ENCODE measurements at regions of chr14 and their contacts with region 1.

Region 1: DNA sequence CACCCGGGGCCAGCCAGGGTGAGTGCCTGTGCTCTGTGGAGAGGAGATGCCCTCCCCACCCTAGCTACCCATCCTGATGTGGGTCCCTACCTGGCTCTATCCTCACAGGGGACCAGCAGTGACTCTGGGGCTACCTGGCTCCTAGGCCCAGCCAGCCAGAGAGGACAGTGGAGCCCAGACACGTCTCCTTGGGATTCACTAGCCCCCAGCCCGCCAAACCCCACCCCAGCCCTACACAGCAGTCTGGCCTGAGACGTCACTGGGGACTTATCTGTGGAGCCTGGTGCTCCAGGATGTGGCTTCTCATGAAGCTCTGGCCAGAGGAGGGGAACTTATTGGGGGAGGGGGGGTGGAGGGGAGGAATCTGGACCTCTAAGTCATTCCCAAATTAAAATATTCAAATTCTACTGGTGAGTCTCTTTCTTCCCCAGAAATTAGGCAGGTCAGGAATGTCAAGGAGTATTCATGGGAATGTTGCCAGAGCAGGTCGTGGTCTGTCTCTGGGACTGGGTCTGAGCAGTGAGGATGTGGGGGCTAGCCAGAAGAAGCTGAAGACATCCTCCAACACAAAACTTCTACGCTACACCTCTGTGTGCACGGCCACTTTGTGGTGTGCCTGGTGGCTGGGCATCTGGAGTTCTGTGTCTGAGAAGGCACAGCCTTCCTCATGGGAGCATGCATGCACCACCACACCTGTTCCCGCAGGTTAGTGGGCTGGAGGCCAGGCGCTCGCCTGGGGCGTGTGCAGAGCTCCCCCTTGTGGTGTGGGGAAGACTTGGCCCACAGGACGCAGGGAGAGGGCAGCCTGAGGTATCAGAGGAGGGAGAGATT is 2.7 kb downstream of the CMTM5 start:
- DNase-seq: peak; percentile 67
- ATAC-seq: peak; percentile 93
- H3K4me3 Mint-ChIP-seq: no peak overlapping the region
- H3K27ac Mint-ChIP-seq: no peak overlapping the region
- H3K4me1 Mint-ChIP-seq: no peaks in the 10 kb centered on the region
- H3K27me3 Mint-ChIP-seq: no peaks in the 10 kb centered on the region
- CTCF ChIP-seq: peak; percentile 91

Region 2: DNA sequence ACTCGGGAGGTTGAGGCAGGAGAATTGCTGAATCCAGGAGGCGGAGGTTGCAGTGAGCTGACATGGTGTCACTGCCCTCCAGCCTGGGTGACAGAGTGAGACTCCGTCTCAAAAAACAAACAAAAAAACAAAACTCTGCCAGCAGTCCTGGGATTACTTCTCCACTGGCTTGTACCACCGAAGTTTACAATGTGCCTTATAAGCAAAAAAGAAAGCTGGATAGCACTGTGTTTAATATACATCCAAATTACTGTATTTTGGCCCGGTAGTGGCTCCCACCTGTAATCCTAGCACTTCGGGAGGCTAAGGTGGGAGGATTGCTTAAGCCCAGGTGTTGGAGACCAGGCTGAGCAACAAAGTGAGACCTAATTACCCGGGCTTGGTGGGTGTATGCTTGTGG is 110.4 kb before region 1 on chr14:
- CTCF ChIA-PET with region 1: interaction called, 29 read pairs
- POLR2A ChIA-PET with region 1: no interaction called
- intact Hi-C with region 1: loop called (anchors 10 kb)
- DNase-seq: no peak
- ATAC-seq: no peak
- H3K4me3 Mint-ChIP-seq: no peak overlapping the region
- H3K27ac Mint-ChIP-seq: no peak overlapping the region
- H3K4me1 Mint-ChIP-seq: no peaks in the 10 kb centered on the region
- H3K27me3 Mint-ChIP-seq: peaks cover 4% of the 10 kb centered on the region
- CTCF ChIP-seq: no peak

Region 3: DNA sequence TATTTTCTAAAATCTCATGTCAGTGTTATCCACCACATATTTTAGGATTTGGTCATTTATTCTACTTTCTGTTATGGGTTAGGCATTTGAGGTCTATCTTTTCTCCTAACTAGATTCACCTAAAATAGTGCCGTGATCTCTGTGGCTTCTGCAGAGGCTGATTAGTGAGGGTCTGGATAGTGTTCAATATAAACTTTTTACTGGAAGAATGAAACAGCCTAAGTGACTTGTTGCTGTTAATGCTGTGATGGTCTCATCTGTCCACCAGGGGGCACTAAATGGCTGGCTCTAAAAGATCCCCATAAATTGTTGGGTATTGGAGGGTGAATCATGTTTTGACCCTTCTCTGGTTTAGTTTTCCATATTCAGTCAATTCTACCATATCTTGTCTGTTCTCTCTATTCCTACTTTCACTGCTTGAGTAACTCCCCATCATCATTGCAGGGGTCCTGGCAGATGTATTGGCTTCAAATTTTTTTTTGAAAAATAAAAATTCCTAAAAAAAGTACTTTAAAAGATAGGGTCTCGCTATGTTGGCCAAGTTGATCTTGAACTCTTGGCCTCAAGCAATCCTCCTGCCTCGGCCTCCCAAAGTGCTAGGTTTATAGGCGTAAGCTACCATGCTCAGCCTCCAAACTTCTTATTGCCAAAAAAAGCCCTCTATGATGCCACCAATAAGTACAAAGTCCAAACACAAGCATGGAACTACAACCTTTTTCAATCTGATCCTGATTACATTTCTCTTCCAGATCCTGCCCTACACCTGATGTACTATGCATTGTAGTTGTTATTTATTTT is 51.4 kb before region 1 on chr14:
- CTCF ChIA-PET with region 1: interaction called, 86 read pairs
- POLR2A ChIA-PET with region 1: interaction called, 11 read pairs
- intact Hi-C with region 1: loop called (anchors 2 kb)
- DNase-seq: peak; percentile 86
- ATAC-seq: peak; percentile 88
- H3K4me3 Mint-ChIP-seq: no peak overlapping the region
- H3K27ac Mint-ChIP-seq: no peak overlapping the region
- H3K4me1 Mint-ChIP-seq: peaks cover 18% of the 10 kb centered on the region
- H3K27me3 Mint-ChIP-seq: no peaks in the 10 kb centered on the region
- CTCF ChIP-seq: peak; percentile 86

Region 4: GRCh38 chr14:23352511-23353432 is 26.8 kb before region 1 on chr14 and contains the start of gene SLC22A17:
- CTCF ChIA-PET with region 1: interaction called, 19 read pairs
- POLR2A ChIA-PET with region 1: no interaction called
- intact Hi-C with region 1: no loop called
- DNase-seq: peak; percentile 71
- ATAC-seq: peak; percentile 92
- H3K4me3 Mint-ChIP-seq: peak within 1 kb of the TSS; percentile 54
- H3K27ac Mint-ChIP-seq: no peak within 1 kb of the TSS
- H3K4me1 Mint-ChIP-seq: peaks cover 4% of the 10 kb centered on the region
- H3K27me3 Mint-ChIP-seq: peaks cover 35% of the 10 kb centered on the region
- CTCF ChIP-seq: no peak
- total RNA-seq, gene SLC22A17: 2.3 TPM

Region 5: DNA sequence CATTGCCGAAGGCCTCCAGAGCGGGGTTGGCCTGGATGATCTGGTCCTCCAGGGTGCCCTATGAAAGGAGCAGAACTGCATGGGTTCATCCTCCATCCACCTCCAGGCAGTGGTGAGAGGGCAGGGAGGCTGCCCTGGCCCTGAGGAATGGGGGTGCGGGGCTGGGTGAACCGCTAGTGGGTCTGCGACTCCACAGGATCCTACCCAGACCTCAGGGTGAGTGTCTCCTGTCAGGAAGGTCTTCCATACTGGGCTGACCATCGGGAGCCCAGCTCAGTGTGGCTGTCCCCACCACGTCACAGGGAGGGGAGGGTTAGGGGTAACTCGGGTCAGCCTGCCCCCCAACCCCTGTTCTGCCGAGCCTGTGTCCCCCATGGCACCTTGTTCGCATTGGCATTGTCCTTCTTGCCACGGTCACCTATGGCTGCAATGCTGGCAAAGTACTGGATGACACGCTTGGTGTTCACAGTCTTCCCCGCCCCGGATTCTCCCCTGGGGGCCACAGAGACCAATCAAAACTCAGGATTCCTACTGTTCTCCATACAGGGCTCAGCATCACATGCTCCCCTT is 24.8 kb after region 1 on chr14:
- CTCF ChIA-PET with region 1: no interaction called
- POLR2A ChIA-PET with region 1: no interaction called
- intact Hi-C with region 1: no loop called
- DNase-seq: no peak
- ATAC-seq: no peak
- H3K4me3 Mint-ChIP-seq: no peak overlapping the region
- H3K27ac Mint-ChIP-seq: no peak overlapping the region
- H3K4me1 Mint-ChIP-seq: no peaks in the 10 kb centered on the region
- H3K27me3 Mint-ChIP-seq: no peaks in the 10 kb centered on the region
- CTCF ChIP-seq: no peak

Region 6: GRCh38 chr14:23492618-23493272 is 113.2 kb after region 1 on chr14:
- CTCF ChIA-PET with region 1: no interaction called
- POLR2A ChIA-PET with region 1: no interaction called
- intact Hi-C with region 1: no loop called
- DNase-seq: no peak
- ATAC-seq: no peak
- H3K4me3 Mint-ChIP-seq: no peak overlapping the region
- H3K27ac Mint-ChIP-seq: no peak overlapping the region
- H3K4me1 Mint-ChIP-seq: no peaks in the 10 kb centered on the region
- H3K27me3 Mint-ChIP-seq: no peaks in the 10 kb centered on the region
- CTCF ChIP-seq: no peak

Measured in activated CD8-positive, alpha-beta T cell treated with anti-CD3 and anti-CD28 coated beads for 36 hours (primary cell).